Cardiac septum (tissue), 1 donor: ENCODE measurements at regions of chr15 and their contacts with region 1.

Region 1: DNA sequence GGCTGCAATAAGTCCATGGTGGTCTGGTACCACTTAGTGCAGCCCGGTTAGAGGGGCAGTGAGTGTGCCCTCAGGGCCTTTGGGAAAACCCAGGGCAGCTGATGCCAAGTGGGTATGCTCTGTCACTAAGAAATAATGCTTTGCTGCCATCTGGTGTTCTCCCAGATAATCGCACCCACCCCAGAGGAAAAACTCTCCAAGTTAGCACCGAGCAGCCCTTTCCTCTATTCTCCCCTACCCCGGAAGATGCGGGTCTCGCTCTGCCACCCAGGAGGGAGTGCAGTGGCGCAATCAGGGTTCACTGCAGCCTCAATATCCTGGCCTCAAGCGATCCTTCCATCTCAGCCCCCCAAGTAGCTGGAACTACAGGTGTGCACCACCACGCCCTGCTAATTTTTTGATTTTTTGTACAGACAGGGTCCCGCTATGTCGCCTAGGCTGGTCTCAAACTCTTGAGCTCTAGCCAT is 21.3 kb upstream of the DAPK2 start:
- DNase-seq: peak; percentile 80

Region 2: GRCh38 chr15:63752075-63752684 is 315.4 kb before region 1 on chr15:
- intact Hi-C with region 1: loop called (anchors 2 kb)
- DNase-seq: no peak

Region 3: GRCh38 chr15:63945007-63945788 is 122.4 kb before region 1 on chr15:
- intact Hi-C with region 1: no loop called
- DNase-seq: peak; percentile 86